Right ventricle myocardium superior (tissue), 1 donor: ENCODE measurements at regions of chr11 and their contacts with region 1.

Region 1: GRCh38 chr11:76860539-76861475 is at the start of gene ACER3:
- DNase-seq: peak; percentile 96
- ATAC-seq: peak; percentile 99
- total RNA-seq, gene ACER3: 10.3 TPM

Region 2: GRCh38 chr11:76810151-76810853 is 50.5 kb before region 1 on chr11:
- intact Hi-C with region 1: loop called (anchors 10 kb)
- DNase-seq: no peak
- ATAC-seq: peak; percentile 35